ENCODE measurements at regions of chr10 and their contacts with region 1.

Region 1: DNA sequence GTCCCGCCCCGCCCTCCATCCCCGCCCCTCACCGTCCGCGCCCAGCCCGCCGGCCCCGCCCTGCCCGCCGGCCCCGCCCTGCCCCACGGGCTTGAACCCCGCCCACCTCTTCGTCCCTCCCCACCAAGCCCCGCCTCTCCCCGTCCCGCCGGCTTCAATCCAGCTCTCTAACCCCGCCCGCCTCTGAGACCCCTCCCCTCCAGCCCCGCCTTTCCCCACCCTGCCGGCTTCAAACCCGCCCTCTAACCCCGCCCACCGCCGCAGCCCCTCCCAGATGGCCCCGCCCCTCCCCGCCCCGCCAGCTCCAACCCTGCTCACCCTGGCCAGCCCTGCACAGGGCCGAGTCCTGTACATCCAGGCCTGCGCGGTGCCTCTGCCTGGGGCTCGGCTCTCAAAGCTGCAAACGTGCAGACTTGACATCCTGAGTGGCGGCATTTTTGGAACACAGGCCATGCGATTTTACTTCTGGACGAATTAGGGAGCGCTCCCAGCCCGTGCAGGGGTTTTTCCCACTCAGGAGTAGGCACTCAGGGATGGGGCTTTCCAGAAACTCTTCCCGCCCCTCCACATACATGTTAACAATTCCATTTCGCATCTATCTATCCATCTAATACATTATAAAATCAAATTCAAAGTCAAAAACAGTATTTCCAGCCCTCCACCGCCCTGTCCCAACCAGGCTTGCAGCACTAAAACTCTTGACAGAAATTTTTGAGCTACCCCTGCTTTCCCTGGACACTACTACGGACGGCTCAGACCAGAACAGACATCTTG is 475 bp upstream of the NMT2 start:
- DNase-seq: peak; percentile 72
- ATAC-seq: peak; percentile 85
- H3K4me3 ChIP-seq: peak overlapping the region; percentile 62 to 65 (median 62)
- H3K27ac ChIP-seq: peak overlapping the region; percentile 26
- H3K4me1 ChIP-seq: peaks cover 49% of the 10 kb centered on the region
- H3K27me3 ChIP-seq: no peaks in the 10 kb centered on the region
- CTCF ChIP-seq: no peak
- EP300 ChIP-seq: no peak
- POLR2A ChIP-seq: peak in 1 of 2 experiments; percentile 79; a peak in 2 of 4 replicates
- RAD21 ChIP-seq: no peak

Region 2: GRCh38 chr10:14995964-14996565 is 172.9 kb before region 1 on chr10:
- CTCF ChIA-PET with region 1: no interaction called
- POLR2A ChIA-PET with region 1: no interaction called
- in situ Hi-C with region 1: no loop called
- intact Hi-C with region 1: loop called (anchors 10 kb)
- DNase-seq: no peak
- ATAC-seq: no peak
- H3K4me3 ChIP-seq: no peak overlapping the region
- H3K27ac ChIP-seq: no peak overlapping the region
- H3K4me1 ChIP-seq: peaks cover 28% of the 10 kb centered on the region
- H3K27me3 ChIP-seq: no peaks in the 10 kb centered on the region; a peak in 1 of 5 replicates
- CTCF ChIP-seq: no peak
- EP300 ChIP-seq: no peak
- POLR2A ChIP-seq: no peak
- RAD21 ChIP-seq: no peak

Region 3: GRCh38 chr10:15106352-15107013 is 62.5 kb before region 1 on chr10:
- CTCF ChIA-PET with region 1: no interaction called
- POLR2A ChIA-PET with region 1: interaction called, 3 read pairs
- in situ Hi-C with region 1: no loop called
- intact Hi-C with region 1: loop called (anchors 10 kb)
- DNase-seq: peak; percentile 66
- ATAC-seq: peak; percentile 90
- H3K4me3 ChIP-seq: no peak overlapping the region
- H3K27ac ChIP-seq: no peak overlapping the region
- H3K4me1 ChIP-seq: peaks cover 20% of the 10 kb centered on the region
- H3K27me3 ChIP-seq: no peaks in the 10 kb centered on the region
- CTCF ChIP-seq: peak; percentile 88
- EP300 ChIP-seq: no peak
- POLR2A ChIP-seq: no peak
- RAD21 ChIP-seq: peak; percentile 58; the same call in 1 of the 2 replicates

Region 4: DNA sequence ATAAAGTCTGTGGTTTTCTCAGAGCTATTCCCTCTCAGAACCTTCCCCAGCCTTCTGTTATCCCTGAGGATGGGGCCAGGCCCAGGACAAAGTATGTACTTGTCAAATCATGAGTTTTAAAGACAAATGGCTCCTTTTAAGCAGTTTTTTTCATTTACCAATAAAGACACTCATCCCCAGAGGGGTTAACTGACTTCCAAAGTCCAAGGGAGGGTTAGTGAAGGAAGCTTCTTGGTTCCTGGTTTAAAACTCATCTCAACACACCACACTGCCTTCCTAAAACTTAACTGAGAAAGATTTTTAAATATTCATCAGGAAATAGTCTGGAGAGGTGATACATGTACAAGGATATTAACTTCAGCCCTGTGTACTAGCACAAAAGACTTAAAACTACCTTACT is 16.4 kb before region 1 on chr10:
- CTCF ChIA-PET with region 1: no interaction called
- POLR2A ChIA-PET with region 1: interaction called, 11 read pairs
- in situ Hi-C with region 1: no loop called
- intact Hi-C with region 1: no loop called
- DNase-seq: no peak
- ATAC-seq: peak; percentile 57
- H3K4me3 ChIP-seq: peak overlapping the region; percentile 2 to 26 (median 9); a peak in 1 of 6 replicates
- H3K27ac ChIP-seq: peak overlapping the region; percentile 84
- H3K4me1 ChIP-seq: peaks cover 45% of the 10 kb centered on the region
- H3K27me3 ChIP-seq: no peaks in the 10 kb centered on the region
- CTCF ChIP-seq: no peak
- EP300 ChIP-seq: no peak
- POLR2A ChIP-seq: no peak
- RAD21 ChIP-seq: no peak

Region 5: DNA sequence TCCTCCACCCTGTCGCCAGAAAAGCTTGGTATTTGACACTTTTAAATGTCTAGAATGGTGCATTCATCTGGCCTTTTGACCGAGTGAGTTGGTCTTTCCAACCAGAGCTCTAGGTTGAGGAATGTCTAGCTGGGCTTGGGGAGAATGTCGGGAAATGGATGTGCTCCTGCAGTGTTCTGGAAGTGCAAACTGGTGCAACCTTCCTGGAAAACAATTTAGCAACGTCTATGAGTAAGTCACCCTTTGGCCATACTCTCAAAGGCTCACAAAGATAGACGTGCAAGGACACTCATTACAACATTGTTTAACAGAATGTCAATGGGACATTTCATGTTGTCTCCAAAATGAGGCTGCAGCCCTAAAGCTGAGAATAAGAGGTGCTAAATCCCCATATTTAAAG is 11.8 kb after region 1 on chr10:
- CTCF ChIA-PET with region 1: no interaction called
- POLR2A ChIA-PET with region 1: interaction called, 17 read pairs
- in situ Hi-C with region 1: no loop called
- intact Hi-C with region 1: no loop called
- DNase-seq: peak; percentile 20
- ATAC-seq: peak; percentile 67
- H3K4me3 ChIP-seq: no peak overlapping the region
- H3K27ac ChIP-seq: no peak overlapping the region
- H3K4me1 ChIP-seq: peaks cover 48% of the 10 kb centered on the region
- H3K27me3 ChIP-seq: no peaks in the 10 kb centered on the region; a peak in 1 of 5 replicates
- CTCF ChIP-seq: no peak
- EP300 ChIP-seq: no peak
- POLR2A ChIP-seq: no peak
- RAD21 ChIP-seq: no peak

Region 6: GRCh38 chr10:15344876-15345285 is 175.9 kb after region 1 on chr10:
- CTCF ChIA-PET with region 1: no interaction called
- POLR2A ChIA-PET with region 1: no interaction called
- in situ Hi-C with region 1: no loop called
- intact Hi-C with region 1: loop called (anchors 10 kb)
- DNase-seq: peak; percentile 98
- ATAC-seq: peak; percentile 91
- H3K4me3 ChIP-seq: peak overlapping the region in 2 of 3 experiments; percentile 41 to 48; a peak in 3 of 6 replicates
- H3K27ac ChIP-seq: peak overlapping the region; percentile 95
- H3K4me1 ChIP-seq: peaks cover 100% of the 10 kb centered on the region
- H3K27me3 ChIP-seq: no peaks in the 10 kb centered on the region
- CTCF ChIP-seq: no peak
- EP300 ChIP-seq: peak; percentile 82 to 94
- POLR2A ChIP-seq: no peak
- RAD21 ChIP-seq: no peak

Measured in HepG2 (cell line).